ENCODE measurements at regions of chr11 and their contacts with region 1.

Region 1: GRCh38 chr11:12331239-12331874 is 46.0 kb upstream of the PARVA start:
- DNase-seq: peak; percentile 74 to 88
- ATAC-seq: peak; percentile 73 to 88 (median 84)
- H3K4me3 ChIP-seq: no peak overlapping the region
- H3K27ac ChIP-seq: no peak overlapping the region
- H3K4me1 ChIP-seq: peaks cover 0 to 8% (median 4%) of the 10 kb centered on the region in 9 donors
- H3K27me3 ChIP-seq: no peaks in the 10 kb centered on the region
- CTCF ChIP-seq: peak; percentile 42 to 89 (median 81)

Region 2: DNA sequence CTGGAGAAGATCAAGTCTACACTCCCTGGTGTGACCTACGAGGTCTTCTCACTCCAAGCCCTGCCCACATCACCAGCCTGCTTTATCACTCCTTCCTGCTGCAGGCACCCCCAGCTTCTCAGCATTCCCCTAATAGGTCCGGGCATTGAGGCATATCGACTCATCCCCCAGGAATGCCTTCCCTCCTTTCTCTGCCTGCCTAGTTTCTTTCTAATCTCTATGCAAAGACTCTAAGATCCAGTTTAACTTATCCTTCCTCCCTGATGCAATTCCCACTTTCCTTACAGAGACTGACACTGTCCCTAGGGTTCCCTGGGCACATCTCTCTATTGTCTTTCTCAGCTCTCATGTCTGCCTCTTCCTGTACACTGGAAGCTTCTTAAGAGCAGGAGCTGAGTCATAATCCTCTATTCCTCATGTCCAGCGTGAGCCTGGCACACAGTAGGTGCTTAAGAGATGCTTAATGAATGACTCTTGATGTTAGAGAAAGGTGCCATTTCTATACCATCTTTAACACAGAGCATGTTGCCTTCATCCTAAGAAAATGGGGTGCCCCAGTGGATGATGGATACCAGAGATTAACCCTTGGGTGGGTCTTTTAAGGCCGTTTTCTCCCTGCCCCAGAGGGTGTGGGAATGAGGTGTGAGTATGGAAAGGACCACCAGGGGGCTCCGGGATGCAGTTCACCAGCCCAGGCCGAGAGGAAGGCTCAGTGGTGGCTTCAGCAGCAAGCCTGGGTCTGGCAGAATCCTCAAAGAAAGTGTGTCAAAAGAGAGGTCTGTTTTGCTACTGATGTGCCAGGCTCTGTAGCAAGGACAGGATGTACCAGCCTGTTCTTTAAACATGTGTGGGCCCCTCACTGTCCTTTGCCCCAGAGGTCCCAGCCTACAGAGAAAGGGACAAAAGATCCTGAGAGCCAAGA is 80.7 kb after region 1 on chr11:
- intact Hi-C with region 1: loop called in 2 of 10 experiments (anchors 2 to 5 kb)
- DNase-seq: peak; percentile 57 to 78
- ATAC-seq: peak; percentile 73 to 93 (median 85)
- H3K4me3 ChIP-seq: no peak overlapping the region
- H3K27ac ChIP-seq: peak overlapping the region in 4 of 10 donors; percentile 4 to 31 (median 10)
- H3K4me1 ChIP-seq: peaks cover 3 to 79% (median 53%) of the 10 kb centered on the region in 9 donors
- H3K27me3 ChIP-seq: no peaks in the 10 kb centered on the region
- CTCF ChIP-seq: peak; percentile 67 to 88 (median 80)

Region 3: DNA sequence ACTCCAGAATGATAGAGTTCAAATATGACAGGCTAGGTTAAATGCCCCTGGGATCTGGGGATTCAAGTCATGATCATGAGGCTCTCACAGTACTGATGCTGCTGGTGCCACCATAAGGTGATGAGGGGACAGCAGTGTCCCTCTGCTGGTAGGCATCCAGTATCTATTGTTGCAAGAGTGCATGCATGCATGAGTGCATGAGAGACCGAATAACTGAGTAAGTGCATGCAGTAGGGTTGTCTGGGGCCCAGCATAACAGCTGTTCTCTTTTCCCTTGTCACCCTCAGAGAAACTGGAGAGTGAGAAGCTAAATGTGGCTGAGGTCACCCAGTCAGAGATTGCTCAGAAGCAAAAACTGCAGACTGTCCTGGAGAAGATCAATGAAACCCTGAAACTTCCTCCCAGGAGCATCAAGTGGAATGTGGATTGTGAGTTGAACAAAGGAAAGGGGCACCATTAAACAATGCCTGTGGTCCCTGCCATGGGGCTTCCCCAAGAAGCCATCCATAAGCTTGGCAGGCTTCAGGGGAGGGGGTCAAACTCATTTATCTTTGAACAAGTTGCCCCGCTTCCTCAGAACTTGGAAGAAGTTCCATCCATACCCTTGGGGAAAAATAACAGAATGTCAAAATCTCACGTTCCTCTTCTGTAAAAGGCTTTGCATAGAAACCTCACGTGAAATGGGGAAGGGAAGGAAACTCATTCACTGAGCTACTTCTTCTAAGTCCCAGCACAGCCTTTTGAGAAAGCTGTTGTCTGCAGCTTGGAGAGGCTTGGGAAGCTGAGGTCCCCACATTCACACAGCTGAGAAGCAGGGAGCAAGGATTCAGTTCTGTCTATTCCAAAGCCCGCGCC is 165.0 kb after region 1 on chr11:
- intact Hi-C with region 1: loop called in 2 of 10 experiments (anchors 10 kb)
- DNase-seq: no peak
- ATAC-seq: peak in 6 of 8 donors; percentile 25 to 70 (median 62)
- H3K4me3 ChIP-seq: no peak overlapping the region
- H3K27ac ChIP-seq: no peak overlapping the region
- H3K4me1 ChIP-seq: peaks cover 0 to 7% (median 0%) of the 10 kb centered on the region in 9 donors
- H3K27me3 ChIP-seq: no peaks in the 10 kb centered on the region
- CTCF ChIP-seq: peak in 7 of 9 donors; percentile 13 to 44 (median 29)

Region 4: GRCh38 chr11:12893787-12894672 is 562.7 kb after region 1 on chr11:
- intact Hi-C with region 1: loop called (anchors 2 to 5 kb)
- DNase-seq: peak; percentile 60 to 66
- ATAC-seq: peak in 3 of 8 donors; percentile 23 to 31 (median 30)
- H3K4me3 ChIP-seq: no peak overlapping the region
- H3K27ac ChIP-seq: peak overlapping the region in 5 of 10 donors; percentile 12 to 50 (median 25)
- H3K4me1 ChIP-seq: peaks cover 10 to 53% (median 33%) of the 10 kb centered on the region in 9 donors
- H3K27me3 ChIP-seq: no peaks in the 10 kb centered on the region
- CTCF ChIP-seq: peak; percentile 72 to 96 (median 90)

Region 5: DNA sequence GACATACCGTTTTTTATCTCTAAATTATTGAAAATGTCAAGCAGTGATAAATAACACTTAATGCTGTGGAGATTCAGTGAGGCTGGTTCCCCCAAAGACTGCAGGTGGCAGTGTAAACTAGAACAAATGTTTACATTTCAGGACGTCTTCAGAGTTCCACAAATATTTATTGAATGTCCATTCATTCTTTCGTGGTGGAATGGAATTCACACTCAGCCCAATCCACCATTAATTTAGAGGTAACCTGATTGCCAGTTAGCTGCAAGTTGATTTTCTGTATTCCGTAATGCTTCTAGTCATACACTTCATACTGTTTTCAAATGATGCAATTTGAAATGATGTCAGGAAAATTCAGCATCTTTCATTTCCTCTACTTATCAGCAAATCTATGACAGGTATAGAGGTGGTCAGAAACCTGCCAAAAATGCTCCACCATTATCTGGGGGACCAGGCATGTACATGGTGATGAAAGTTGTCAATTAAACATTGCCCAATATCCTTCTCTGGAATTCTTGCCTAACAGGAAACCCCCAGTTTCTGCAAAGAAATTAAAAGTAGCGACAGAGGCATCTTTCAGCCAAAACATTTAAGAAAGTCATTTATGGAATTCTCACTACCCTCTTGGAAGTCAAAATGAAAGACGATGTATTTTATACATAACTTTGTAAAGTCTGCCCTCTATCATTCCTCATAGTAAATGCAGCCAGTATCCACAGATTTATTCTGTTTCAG is 851.9 kb after region 1 on chr11:
- intact Hi-C with region 1: no loop called
- DNase-seq: no peak
- ATAC-seq: peak in 7 of 8 donors; percentile 45 to 69 (median 63)
- H3K4me3 ChIP-seq: peak overlapping the region in 6 of 10 donors; percentile 8 to 29 (median 18)
- H3K27ac ChIP-seq: no peak overlapping the region
- H3K4me1 ChIP-seq: peaks cover 0 to 8% (median 5%) of the 10 kb centered on the region in 9 donors
- H3K27me3 ChIP-seq: no peaks in the 10 kb centered on the region
- CTCF ChIP-seq: peak; percentile 21 to 65 (median 47)

Measured in heart right ventricle (tissue), 16 donors.